Body of pancreas (tissue), 4 donors: ENCODE measurements at regions of chr4 and their contacts with region 1.

Region 1: DNA sequence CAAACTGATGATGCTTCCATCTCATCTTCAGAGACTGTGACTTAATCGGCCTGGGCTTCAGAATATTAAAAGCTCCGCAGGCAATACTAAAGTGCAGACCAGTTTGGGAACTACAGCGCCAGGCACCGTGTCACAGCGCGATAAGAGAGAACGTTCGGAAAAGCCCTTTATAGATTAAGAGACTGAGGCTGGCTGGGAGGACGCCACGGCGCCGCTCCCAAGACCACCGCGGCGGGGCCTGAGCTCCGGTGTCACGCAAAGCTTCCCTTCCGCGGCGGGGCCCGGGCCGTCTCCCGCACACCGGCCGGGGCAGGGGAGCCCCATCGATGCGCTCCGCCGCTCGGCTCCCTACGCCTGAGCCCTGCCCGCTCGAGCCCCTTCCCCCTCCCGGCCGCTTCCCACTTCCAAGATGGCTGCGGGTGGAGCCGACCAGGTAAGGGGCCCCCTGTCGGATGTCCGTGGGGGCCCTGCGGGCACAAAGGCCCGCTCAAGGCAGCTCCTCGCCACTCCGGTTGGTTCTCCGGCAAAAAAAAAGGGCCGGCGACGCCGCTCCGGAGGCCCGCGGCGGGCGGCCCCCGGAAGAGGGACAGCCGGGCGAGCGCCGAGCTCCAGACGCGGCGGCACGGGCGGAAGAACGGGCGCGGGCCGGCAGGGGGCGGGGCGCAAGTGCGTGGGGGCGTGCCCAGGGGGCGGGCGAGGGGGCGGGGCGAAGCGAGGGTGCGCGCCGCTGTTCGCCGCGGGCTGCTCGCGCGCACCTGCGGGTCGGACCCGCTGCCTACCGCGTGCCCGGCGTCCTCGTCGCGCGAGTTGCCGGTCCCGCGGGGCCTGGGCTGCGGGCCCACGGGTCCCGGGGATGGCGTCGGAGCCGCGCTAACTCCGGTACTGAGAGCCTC is at the start of gene TBC1D14:
- DNase-seq: peak; percentile 88 to 90 (median 90)
- ATAC-seq: peak; percentile 93
- H3K4me3 ChIP-seq: peak within 1 kb of the TSS; percentile 57 to 67
- H3K27ac ChIP-seq: peak within 1 kb of the TSS; percentile 84 to 100 (median 99)
- H3K4me1 ChIP-seq: peaks cover 31% of the 10 kb centered on the region
- H3K27me3 ChIP-seq: no peaks in the 10 kb centered on the region
- CTCF ChIP-seq: peak in 4 of 7 experiments; percentile 13 to 35 (median 24)
- POLR2A ChIP-seq: peak; percentile 50 to 64 (median 60)
- total RNA-seq, gene TBC1D14: 10.5 to 20.0 TPM

Region 2: GRCh38 chr4:6633041-6633906 is 276.0 kb before region 1 on chr4:
- intact Hi-C with region 1: no loop called
- DNase-seq: peak in 3 of 4 donors; percentile 20 to 68 (median 29)
- ATAC-seq: peak; percentile 30
- H3K4me3 ChIP-seq: no peak overlapping the region
- H3K27ac ChIP-seq: peak overlapping the region in 1 of 4 donors; percentile 41
- H3K4me1 ChIP-seq: no peaks in the 10 kb centered on the region
- H3K27me3 ChIP-seq: no peaks in the 10 kb centered on the region
- CTCF ChIP-seq: no peak
- POLR2A ChIP-seq: no peak

Region 3: GRCh38 chr4:6984612-6985425 is 75.5 kb after region 1 on chr4:
- intact Hi-C with region 1: loop called (anchors 5 kb)
- DNase-seq: no peak
- ATAC-seq: no peak
- H3K4me3 ChIP-seq: no peak overlapping the region
- H3K27ac ChIP-seq: no peak overlapping the region
- H3K4me1 ChIP-seq: peaks cover 43% of the 10 kb centered on the region
- H3K27me3 ChIP-seq: no peaks in the 10 kb centered on the region
- CTCF ChIP-seq: no peak
- POLR2A ChIP-seq: no peak